ENCODE measurements at regions of chr11 and their contacts with region 1.

Region 1: DNA sequence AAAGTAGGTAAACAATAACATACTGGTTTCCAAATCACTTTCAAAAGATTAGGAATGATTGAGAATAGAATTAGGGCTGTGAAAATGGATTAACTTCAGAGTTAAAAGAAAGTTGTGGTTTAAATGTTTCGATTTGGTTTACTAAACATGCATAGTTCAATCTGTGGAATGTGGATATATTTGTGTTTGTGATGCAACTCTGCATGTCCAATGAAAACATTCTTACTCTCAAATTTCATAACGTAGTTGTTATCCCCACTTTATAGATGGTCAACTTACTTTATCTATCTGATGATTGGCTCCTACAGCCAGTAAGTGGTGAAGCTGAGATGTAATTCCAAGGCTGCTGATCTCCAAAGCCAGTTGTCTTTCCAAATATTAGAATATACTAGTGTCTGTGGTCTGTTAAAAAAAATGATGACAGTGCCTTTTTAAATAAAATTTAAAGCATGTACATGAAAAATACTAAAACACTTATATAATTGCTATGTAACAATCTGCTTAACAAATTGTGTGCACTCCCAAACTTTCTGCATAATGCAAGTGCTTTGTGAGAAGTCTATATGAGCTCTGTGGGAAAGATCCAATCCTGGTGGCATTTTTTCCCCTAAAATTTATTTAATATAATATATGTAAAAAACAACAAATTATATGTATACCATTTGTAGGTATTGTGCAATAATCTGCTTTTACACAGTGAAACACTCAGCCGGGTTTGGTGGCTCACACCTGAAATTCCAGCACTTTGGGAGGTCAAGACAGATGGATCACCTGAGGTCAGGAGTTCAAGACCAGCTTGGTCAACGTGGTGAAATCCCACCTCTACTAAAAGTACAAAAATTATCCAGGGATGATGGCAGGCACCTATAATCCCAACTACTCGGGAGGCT is 9.7 kb upstream of the SIK3 start:
- DNase-seq: no peak
- ATAC-seq: no peak
- H3K4me3 ChIP-seq: no peak overlapping the region
- H3K27ac ChIP-seq: no peak overlapping the region
- H3K4me1 ChIP-seq: no peaks in the 10 kb centered on the region
- CTCF ChIP-seq: no peak
- EP300 ChIP-seq: no peak
- POLR2A ChIP-seq: no peak
- RAD21 ChIP-seq: no peak

Region 2: DNA sequence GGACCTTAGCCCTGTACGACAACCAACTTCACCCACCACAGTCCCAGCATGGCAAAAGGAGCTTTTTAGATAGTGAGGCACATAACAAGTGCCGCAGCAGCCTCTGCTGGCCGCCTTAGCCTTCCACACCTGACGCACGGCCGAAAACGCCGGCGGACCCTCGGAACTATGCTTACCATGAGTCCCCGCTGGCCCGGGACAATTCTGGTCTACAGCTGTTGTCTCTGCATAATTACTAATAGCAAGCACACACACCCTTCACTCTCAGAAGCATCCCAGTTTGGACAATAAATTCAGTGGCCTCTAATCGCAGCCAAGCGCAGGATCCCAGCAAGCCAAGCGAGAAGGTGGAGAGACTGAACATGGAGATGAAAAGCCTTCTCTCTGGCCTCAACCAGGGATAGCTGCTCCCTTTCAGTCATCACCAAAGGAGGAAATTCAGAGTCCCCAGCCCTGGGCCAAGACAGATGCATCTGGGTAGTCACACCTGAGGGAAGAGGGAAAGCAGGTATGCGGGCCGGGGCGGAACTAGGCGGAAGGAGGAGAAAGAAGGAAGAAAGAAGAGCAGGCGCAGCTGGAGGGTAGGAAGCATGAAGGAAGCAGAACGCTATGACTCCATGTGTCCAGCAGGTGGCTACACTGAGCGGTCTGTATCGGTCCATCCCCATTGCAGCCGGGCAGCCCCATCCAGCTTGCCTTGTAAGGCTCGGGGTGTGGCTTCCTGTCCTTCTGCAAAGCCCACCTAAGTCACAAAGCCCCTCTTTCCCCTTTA is 375.5 kb before region 1 on chr11:
- CTCF ChIA-PET with region 1: interaction called, 11 read pairs
- POLR2A ChIA-PET with region 1: no interaction called
- DNase-seq: peak; percentile 62 to 67
- ATAC-seq: peak; percentile 84 to 94
- H3K4me3 ChIP-seq: no peak overlapping the region
- H3K27ac ChIP-seq: no peak overlapping the region
- H3K4me1 ChIP-seq: no peaks in the 10 kb centered on the region
- CTCF ChIP-seq: peak; percentile 54
- EP300 ChIP-seq: no peak
- POLR2A ChIP-seq: no peak
- RAD21 ChIP-seq: peak; percentile 30 to 39; a peak in 2 of 5 replicates

Region 3: GRCh38 chr11:116835791-116836631 is 271.9 kb before region 1 on chr11:
- CTCF ChIA-PET with region 1: interaction called, 14 read pairs
- POLR2A ChIA-PET with region 1: no interaction called
- DNase-seq: peak; percentile 67 to 89
- ATAC-seq: peak; percentile 87 to 92
- H3K4me3 ChIP-seq: peak overlapping the region; percentile 27
- H3K27ac ChIP-seq: peak overlapping the region; percentile 20 to 79; a peak in 5 of 6 replicates
- H3K4me1 ChIP-seq: 0 out of 3 replicates have a peak, but pooled peaks cover 4% of the 10 kb centered on the region
- CTCF ChIP-seq: peak; percentile 58
- EP300 ChIP-seq: no peak
- POLR2A ChIP-seq: peak; percentile 41
- RAD21 ChIP-seq: peak; percentile 52 to 63

Region 4: DNA sequence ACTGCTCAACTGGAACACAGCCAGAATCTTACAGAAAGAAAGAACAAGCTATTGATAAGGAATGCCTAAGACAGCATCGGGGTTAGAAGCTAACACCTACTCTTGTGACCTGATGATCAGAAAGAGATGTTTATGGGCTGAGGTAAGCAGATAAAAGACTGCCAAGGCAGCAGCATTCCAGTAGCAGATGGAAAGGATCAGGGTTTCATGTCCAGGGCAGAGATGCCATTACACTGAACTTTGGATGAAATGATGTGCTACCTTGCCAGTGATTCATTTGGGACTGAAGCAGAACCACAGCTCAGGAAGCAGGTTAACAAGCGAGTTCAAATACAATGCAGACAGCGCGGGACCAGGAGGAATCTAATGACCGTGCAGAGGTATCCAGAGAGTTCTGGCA is 243.4 kb before region 1 on chr11:
- CTCF ChIA-PET with region 1: interaction called, 17 read pairs
- POLR2A ChIA-PET with region 1: no interaction called
- DNase-seq: no peak
- ATAC-seq: no peak
- H3K4me3 ChIP-seq: no peak overlapping the region
- H3K27ac ChIP-seq: no peak overlapping the region
- H3K4me1 ChIP-seq: no peaks in the 10 kb centered on the region
- CTCF ChIP-seq: no peak
- EP300 ChIP-seq: no peak
- POLR2A ChIP-seq: no peak
- RAD21 ChIP-seq: no peak

Region 5: DNA sequence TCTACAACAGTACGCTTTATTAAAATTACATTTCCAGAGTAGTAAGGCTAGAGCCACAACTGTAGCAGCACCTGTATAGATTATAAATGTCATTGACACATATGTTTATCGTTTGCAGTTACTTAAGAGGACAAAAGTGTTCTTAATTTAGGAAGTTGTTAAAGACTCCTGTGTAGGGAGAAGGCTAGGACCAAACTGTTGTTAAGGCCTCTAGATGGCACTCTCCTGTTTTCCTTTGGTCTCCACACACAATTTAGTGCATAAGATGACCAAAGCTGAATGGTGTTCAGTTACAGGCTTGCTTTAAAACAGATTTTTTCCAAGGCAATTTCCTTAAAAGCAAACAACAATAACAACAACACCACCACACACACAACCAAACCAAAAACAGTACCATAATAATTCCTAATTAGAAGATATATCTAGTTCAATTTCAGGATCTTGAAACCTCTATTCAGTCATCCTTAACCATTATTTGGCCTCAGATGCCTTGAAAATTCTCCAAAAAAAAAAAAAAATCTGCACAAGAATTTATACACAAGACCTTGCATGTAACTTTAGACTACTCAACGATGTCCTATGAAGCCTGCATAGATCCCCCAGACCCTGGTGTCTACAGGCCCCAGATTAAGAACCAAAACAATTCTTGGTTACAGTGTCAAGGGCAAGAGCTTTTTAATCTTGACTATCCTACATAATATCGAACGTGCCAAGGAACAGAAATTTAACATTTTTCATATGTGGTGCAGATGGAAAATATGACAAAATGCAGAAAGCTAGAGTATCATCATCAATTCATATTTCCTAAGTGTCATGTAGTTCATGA is 227.9 kb before region 1 on chr11:
- CTCF ChIA-PET with region 1: interaction called, 77 read pairs
- POLR2A ChIA-PET with region 1: no interaction called
- DNase-seq: peak; percentile 31 to 61
- ATAC-seq: peak; percentile 94 to 95; a peak in 5 of 6 replicates
- H3K4me3 ChIP-seq: no peak overlapping the region
- H3K27ac ChIP-seq: no peak overlapping the region
- H3K4me1 ChIP-seq: no peaks in the 10 kb centered on the region
- CTCF ChIP-seq: peak; percentile 75
- EP300 ChIP-seq: no peak
- POLR2A ChIP-seq: no peak
- RAD21 ChIP-seq: peak; percentile 79 to 84

Region 6: DNA sequence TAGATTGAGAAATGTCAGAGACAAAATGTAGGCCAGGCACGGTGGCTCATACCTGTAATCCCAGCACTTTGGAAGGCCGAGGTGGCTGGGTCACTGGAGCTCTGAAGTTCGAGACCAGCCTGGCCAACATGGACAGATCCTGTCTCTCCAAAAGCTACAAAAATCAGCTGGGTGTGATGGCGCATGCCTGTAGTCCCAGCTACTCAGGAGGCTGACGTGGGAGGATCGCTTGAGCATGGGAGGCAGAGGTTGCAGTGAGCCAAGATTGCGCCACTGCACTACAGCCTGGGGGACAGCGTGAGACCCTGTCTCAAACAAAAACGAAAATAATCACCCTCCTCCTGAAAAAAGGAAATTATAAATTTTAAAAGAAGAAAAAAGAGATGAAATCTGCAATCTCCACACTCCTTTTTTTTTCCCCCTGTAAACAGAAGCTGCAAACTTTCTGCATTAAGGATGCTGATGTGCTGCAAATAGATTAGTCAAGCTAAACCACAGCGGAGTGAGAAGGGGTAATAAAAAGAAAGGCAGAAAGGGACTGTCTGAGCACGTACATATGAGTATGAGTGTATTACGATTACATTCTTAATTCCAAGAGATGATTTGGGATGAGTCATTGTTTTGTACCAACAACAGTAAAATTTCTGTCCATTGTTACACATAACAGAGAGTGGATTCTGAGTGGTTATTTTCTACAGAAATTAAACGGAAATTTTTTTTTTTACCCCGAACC is 97.0 kb before region 1 on chr11:
- CTCF ChIA-PET with region 1: no interaction called
- POLR2A ChIA-PET with region 1: no interaction called
- DNase-seq: peak; percentile 54 to 63
- ATAC-seq: peak; percentile 92 to 93
- H3K4me3 ChIP-seq: no peak overlapping the region
- H3K27ac ChIP-seq: peak overlapping the region; percentile 27 to 75; a peak in 4 of 6 replicates
- H3K4me1 ChIP-seq: peaks cover 29% of the 10 kb centered on the region
- CTCF ChIP-seq: no peak
- EP300 ChIP-seq: no peak
- POLR2A ChIP-seq: no peak
- RAD21 ChIP-seq: no peak

Region 7: DNA sequence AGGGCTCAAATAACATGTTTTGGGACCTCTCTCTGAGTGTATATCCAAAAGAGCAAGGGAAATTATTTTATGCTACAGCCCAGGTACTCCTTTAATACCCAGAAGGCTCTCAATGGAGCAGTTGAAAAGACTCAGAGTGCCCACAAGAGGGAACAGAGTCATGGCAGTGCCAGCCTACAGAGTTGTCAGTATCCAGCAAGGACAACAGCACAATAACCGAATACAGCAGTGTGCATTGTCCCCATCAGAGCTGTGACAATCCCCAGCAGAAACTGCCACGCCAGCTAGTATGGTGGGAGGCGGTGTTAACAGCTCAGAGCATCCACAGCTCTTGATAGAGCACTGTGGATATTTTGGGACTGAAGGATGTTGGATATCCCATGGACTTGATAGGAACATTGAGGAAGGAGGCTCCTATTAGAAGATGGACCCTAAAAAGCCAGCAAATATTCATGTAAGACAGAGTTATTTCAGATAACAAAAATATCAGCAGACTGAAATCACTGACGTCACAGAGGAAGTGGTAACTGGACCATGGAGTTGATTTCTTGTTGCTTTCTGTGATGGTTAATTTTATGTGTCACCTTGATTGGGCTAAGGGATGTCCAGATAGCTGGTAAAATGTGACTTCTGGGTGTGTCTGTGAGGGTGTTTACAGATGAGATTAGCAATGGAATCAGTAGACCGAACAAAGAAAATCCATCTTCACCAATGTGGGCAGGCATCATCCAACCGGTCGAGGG is 18.4 kb after region 1 on chr11:
- CTCF ChIA-PET with region 1: interaction called, 17 read pairs
- POLR2A ChIA-PET with region 1: no interaction called
- DNase-seq: no peak
- ATAC-seq: no peak
- H3K4me3 ChIP-seq: no peak overlapping the region
- H3K27ac ChIP-seq: no peak overlapping the region
- H3K4me1 ChIP-seq: peaks cover 18% of the 10 kb centered on the region
- CTCF ChIP-seq: no peak
- EP300 ChIP-seq: no peak
- POLR2A ChIP-seq: no peak
- RAD21 ChIP-seq: no peak

Region 8: DNA sequence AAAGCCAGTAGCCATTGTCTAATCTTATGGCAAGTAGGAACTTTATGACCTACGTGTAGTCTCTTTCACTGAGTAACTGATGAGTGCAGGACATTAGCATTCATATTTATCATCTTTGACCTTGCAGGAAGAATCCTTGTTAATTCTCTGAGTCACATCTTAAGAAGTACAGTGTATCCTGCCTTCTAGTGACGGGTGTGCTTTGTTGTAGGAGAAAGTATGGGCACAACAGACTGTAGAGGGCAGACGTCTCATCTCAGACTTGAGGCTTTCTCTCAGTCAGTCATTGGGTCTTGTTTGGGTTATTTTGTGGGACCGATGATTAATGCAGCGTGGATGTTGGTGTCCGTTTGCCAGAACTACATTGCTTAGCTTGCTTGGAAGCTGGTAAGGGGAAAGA is 131.4 kb after region 1 on chr11:
- CTCF ChIA-PET with region 1: no interaction called
- POLR2A ChIA-PET with region 1: no interaction called
- DNase-seq: peak; percentile 37 to 71
- ATAC-seq: peak; percentile 97 to 98
- H3K4me3 ChIP-seq: no peak overlapping the region
- H3K27ac ChIP-seq: no peak overlapping the region
- H3K4me1 ChIP-seq: peaks cover 8% of the 10 kb centered on the region
- CTCF ChIP-seq: 0 out of 3 replicates have a peak, but pooled peaks have one; percentile 12
- EP300 ChIP-seq: no peak
- POLR2A ChIP-seq: no peak
- RAD21 ChIP-seq: no peak

Measured in A549 (cell line).